ENCODE measurements at regions of chr22 and their contacts with region 1.

Region 1: DNA sequence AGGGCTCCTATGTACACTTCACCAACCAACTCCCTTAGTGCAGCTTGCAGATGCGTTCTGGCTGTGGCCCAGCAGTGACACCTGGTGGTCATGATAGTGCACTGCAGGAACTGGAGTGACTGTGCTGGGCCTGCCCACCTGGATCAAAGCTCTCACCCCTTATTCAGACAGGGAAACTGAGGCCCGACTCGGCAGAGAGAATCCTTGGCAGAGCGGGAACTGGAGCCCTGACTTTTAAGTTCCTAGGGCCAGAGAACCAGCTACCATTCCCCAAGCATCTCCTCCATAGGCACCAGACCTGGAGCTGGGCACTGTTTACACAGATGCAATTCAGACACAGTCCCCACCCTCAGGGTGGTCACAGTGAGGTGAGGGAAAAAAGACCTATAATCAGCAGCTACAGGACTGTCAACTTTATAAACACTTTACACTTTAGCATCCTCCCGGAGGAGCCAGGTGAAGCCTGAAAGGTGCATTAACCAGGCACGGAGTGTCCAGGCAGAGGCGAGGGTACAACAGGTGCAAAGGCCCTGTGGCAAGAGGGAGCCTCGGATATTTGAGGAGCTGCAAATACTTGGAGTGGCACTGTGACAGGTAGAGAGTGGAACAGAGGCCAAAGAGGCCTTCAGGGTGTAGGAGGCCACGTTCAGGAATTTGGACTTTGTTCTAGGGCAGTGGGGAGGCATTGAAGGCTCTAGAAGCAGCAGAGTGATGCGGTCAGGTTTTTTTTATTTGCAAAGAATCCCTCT is 22.0 kb downstream of the RHBDD3 start:
- DNase-seq: peak; percentile 34
- ATAC-seq: peak; percentile 100
- H3K4me3 ChIP-seq: no peak overlapping the region
- H3K27ac ChIP-seq: no peak overlapping the region
- H3K4me1 ChIP-seq: no peaks in the 10 kb centered on the region
- H3K27me3 ChIP-seq: no peaks in the 10 kb centered on the region
- CTCF ChIP-seq: peak; percentile 59 to 99 (median 94)
- POLR2A ChIP-seq: no peak
- RAD21 ChIP-seq: peak; percentile 85

Region 2: GRCh38 chr22:28600546-28601143 is 645.2 kb before region 1 on chr22:
- CTCF ChIA-PET with region 1: interaction called, 23 read pairs
- POLR2A ChIA-PET with region 1: no interaction called
- RAD21 ChIA-PET with region 1: interaction called in 1 of 2 experiments, 4 read pairs
- intact Hi-C with region 1: loop called (anchors 1 kb)
- DNase-seq: peak; percentile 24
- ATAC-seq: peak; percentile 58
- H3K4me3 ChIP-seq: no peak overlapping the region
- H3K27ac ChIP-seq: no peak overlapping the region
- H3K4me1 ChIP-seq: no peaks in the 10 kb centered on the region
- H3K27me3 ChIP-seq: no peaks in the 10 kb centered on the region
- CTCF ChIP-seq: peak; percentile 12 to 53 (median 52); a peak in 4 of 6 replicates
- POLR2A ChIP-seq: no peak
- RAD21 ChIP-seq: peak; percentile 74

Region 3: DNA sequence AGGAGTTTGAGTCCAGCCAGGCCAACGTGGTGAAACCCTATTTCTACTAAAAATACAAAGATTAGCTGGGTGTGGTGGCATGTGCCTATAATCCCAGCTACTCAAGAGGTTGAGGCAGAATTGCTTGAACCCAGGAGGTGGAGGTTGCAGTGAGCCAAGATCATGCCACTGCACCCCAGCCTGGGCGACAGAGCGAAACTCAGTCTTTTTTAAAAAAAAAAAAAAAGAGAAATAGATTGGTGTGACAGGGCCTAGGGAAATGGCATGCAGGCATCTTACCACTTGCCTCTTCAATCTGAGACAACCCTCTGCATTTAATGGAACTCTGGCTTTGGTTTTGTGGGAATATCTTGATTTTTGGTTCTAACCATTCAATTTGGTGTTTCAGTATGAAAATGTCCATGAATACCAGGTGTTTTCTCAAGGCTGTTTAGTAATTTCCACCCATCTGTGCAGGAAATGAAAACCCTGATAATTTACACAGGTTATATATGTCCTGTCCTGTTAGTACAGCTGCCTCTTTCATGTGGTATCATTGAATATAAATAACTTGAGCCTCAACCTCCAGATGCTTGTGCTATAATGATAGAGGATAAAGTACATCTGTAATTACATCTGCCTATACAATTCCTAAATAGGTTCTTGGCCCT is 453.8 kb before region 1 on chr22:
- CTCF ChIA-PET with region 1: interaction called, 5 read pairs
- POLR2A ChIA-PET with region 1: no interaction called
- RAD21 ChIA-PET with region 1: no interaction called
- intact Hi-C with region 1: loop called (anchors 5 kb)
- DNase-seq: no peak
- ATAC-seq: no peak
- H3K4me3 ChIP-seq: no peak overlapping the region
- H3K27ac ChIP-seq: no peak overlapping the region
- H3K4me1 ChIP-seq: no peaks in the 10 kb centered on the region
- H3K27me3 ChIP-seq: no peaks in the 10 kb centered on the region
- CTCF ChIP-seq: no peak
- POLR2A ChIP-seq: no peak
- RAD21 ChIP-seq: no peak

Region 4: DNA sequence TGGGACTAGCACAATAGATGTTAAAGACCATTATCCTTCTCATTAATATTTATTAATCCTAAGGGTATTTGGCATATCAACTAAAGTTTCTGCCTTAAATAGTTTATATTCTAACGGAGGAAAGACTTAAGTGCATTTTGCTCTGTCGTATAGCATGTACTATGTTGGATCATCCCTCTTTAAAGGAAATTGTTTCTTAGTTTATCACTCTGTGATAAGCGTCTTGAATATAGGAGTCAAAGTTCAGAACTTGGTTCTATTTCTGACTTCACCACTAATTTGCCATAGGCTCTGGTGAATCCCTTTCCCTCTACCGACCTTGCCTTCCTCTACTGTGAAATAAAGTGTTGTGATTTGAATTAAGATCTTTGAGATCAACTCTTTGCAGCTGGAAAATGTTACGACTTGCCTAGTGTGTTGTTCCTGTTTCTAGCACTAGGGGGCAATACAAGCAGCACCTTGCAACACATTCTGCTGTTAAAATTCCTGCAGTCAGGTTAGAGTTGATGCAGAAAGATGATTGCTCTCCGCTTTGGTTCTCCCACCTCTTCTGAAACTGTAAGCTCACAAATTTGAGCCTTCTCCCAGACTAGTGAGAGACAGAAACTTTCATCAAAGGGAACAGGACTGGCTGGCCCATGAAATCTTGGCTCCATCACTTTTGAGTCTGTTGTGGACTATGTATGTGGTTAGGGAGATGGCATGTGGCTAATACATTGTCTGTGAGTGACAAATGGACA is 390.3 kb before region 1 on chr22:
- CTCF ChIA-PET with region 1: interaction called, 8 read pairs
- POLR2A ChIA-PET with region 1: no interaction called
- RAD21 ChIA-PET with region 1: no interaction called
- intact Hi-C with region 1: loop called (anchors 10 kb)
- DNase-seq: peak; percentile 73
- ATAC-seq: peak; percentile 80
- H3K4me3 ChIP-seq: no peak overlapping the region
- H3K27ac ChIP-seq: no peak overlapping the region
- H3K4me1 ChIP-seq: peaks cover 22 to 23% of the 10 kb centered on the region in 2 experiments
- H3K27me3 ChIP-seq: no peaks in the 10 kb centered on the region
- CTCF ChIP-seq: peak; percentile 82 to 93 (median 90)
- POLR2A ChIP-seq: no peak
- RAD21 ChIP-seq: peak; percentile 92

Region 5: DNA sequence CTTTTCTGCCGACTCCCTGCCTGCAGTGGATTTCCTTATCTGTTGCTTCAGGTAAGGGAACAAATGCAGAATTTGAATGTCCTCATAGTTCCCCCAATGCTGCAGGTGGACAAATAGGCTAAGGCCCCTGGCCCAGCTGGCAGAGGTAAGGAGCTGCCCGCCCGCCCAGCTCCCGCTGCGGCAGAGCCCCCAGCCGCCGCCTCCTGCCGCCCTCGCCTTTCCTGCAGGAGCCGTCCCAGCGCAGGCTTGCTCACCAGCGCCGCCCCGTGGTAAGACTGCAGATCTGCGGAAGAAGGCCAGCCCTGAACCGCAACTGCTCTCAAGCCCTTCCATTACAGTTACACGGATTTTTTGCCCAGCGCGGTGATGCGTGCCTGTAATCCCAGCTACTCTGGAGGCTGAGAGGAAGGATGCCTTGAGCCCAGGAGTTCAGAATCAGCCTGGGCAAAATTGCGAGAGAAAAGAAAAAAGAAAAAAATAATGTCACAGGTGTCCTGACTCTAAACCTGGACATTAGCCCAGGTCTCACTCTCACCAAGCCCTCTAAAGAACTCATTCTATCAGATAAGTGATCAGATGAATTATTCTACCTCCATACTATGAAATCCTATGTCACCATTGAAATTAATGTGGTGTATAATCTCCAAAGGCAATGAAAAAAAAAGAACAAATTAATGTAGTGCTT is 91.3 kb before region 1 on chr22:
- CTCF ChIA-PET with region 1: interaction called, 8 read pairs
- POLR2A ChIA-PET with region 1: no interaction called
- RAD21 ChIA-PET with region 1: no interaction called
- intact Hi-C with region 1: loop called (anchors 10 kb)
- DNase-seq: peak; percentile 34
- ATAC-seq: peak; percentile 92
- H3K4me3 ChIP-seq: peak overlapping the region; percentile 9 to 17; a peak in 3 of 4 replicates
- H3K27ac ChIP-seq: no peak overlapping the region
- H3K4me1 ChIP-seq: peaks cover 3 to 8% of the 10 kb centered on the region in 2 experiments; a peak in 2 of 4 replicates
- H3K27me3 ChIP-seq: no peaks in the 10 kb centered on the region
- CTCF ChIP-seq: peak; percentile 75 to 94 (median 93)
- POLR2A ChIP-seq: no peak
- RAD21 ChIP-seq: peak; percentile 82

Region 6: DNA sequence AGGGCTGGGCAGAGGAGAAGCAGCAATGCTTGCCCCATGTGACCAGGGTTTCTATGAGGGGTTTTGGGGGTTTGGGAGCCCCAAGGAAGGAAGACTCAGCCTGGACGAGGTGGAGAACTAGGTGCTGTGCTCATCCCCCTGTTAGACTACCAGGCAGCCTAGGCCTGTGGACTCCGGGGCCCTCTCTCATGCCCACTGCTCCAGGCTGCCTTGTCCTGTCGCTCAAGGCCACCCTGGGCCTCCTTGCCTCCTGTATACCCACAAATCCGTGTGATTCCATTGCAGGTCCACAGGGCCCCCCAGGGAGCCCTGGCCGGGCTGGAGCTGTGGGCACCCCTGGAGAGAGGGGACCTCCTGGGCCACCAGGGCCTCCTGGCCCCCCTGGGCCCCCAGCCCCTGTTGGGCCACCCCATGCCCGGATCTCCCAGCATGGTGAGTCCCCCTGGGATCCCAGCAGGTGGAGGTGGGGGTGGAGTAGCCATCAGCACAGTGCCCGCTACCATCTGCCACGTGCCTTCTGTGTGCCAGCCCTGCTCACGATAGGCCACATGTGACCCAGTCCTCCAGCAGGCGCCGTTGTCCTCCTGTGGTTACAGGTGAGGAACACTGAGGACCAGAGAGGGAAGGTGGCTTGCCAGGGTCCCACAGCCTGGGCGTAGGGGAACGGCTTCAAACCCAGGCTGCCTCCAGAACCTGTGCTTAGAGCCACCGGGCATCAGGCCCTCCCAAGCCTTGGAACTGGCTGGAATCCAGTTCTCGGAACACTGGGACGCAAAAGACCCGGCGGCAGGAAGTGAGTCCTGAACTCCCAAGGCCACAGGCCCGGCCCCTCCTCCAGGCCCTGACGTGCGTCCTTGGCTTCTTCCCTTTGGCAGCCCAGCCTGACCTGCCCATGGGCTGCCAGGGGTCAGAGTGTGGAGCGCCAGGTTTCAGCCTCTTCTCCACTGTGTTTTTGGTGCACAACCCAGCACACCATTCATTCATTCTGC is 13.5 kb before region 1 on chr22:
- CTCF ChIA-PET with region 1: interaction called, 13 read pairs
- POLR2A ChIA-PET with region 1: no interaction called
- RAD21 ChIA-PET with region 1: no interaction called
- intact Hi-C with region 1: no loop called
- DNase-seq: no peak
- ATAC-seq: 0 out of 2 replicates have a peak, but pooled peaks have one; percentile 11
- H3K4me3 ChIP-seq: no peak overlapping the region
- H3K27ac ChIP-seq: no peak overlapping the region
- H3K4me1 ChIP-seq: no peaks in the 10 kb centered on the region
- H3K27me3 ChIP-seq: no peaks in the 10 kb centered on the region
- CTCF ChIP-seq: no peak
- POLR2A ChIP-seq: no peak
- RAD21 ChIP-seq: no peak

Measured in HCT116 (cell line).